Transverse colon (tissue), 4 donors: ENCODE measurements at regions of chr1 and their contacts with region 1.

Region 1: DNA sequence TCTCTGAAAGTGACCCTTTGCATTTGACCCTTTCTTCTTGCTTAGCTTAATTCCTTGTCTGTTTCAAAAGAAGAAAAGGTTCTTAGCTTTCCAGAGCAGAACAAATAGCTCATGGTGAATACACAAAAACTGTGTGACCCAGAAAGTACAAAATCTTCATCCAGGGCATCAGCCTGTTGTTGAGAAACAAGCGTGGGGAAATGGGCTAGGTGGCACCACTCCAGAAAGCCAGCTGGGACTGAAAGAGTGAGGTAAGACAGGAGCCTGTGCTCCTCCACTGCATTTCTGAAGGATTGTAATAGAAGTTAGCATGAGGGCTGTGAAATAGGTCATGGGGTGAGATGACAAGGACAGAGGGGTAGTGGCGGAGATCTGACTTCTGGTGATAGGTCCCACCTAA is 45.8 kb downstream of the CYP2J2 start:
- DNase-seq: no peak
- H3K4me3 ChIP-seq: no peak overlapping the region
- H3K27ac ChIP-seq: peak overlapping the region in 1 of 4 donors; percentile 8
- H3K4me1 ChIP-seq: peaks cover 0 to 11% (median 0%) of the 10 kb centered on the region in 4 donors
- H3K27me3 ChIP-seq: no peaks in the 10 kb centered on the region
- CTCF ChIP-seq: no peak
- EP300 ChIP-seq: no peak
- POLR2A ChIP-seq: no peak

Region 2: GRCh38 chr1:59570524-59570923 is 310.2 kb before region 1 on chr1:
- in situ Hi-C with region 1: no loop called
- intact Hi-C with region 1: no loop called
- DNase-seq: peak; percentile 42
- H3K4me3 ChIP-seq: no peak overlapping the region
- H3K27ac ChIP-seq: no peak overlapping the region
- H3K4me1 ChIP-seq: peaks cover 0 to 17% (median 0%) of the 10 kb centered on the region in 4 donors
- H3K27me3 ChIP-seq: no peaks in the 10 kb centered on the region
- CTCF ChIP-seq: no peak
- EP300 ChIP-seq: no peak
- POLR2A ChIP-seq: no peak

Region 3: GRCh38 chr1:59947047-59947938 is 66.6 kb after region 1 on chr1:
- in situ Hi-C with region 1: loop called in 2 of 4 experiments (anchors 10 kb)
- intact Hi-C with region 1: loop called (anchors 5 kb)
- DNase-seq: peak; percentile 61
- H3K4me3 ChIP-seq: no peak overlapping the region
- H3K27ac ChIP-seq: no peak overlapping the region
- H3K4me1 ChIP-seq: no peaks in the 10 kb centered on the region
- H3K27me3 ChIP-seq: no peaks in the 10 kb centered on the region
- CTCF ChIP-seq: peak; percentile 84 to 92 (median 89)
- EP300 ChIP-seq: no peak
- POLR2A ChIP-seq: no peak